GM18951 (cell line): ENCODE measurements at regions of chr11 and their contacts with region 1.

Region 1: DNA sequence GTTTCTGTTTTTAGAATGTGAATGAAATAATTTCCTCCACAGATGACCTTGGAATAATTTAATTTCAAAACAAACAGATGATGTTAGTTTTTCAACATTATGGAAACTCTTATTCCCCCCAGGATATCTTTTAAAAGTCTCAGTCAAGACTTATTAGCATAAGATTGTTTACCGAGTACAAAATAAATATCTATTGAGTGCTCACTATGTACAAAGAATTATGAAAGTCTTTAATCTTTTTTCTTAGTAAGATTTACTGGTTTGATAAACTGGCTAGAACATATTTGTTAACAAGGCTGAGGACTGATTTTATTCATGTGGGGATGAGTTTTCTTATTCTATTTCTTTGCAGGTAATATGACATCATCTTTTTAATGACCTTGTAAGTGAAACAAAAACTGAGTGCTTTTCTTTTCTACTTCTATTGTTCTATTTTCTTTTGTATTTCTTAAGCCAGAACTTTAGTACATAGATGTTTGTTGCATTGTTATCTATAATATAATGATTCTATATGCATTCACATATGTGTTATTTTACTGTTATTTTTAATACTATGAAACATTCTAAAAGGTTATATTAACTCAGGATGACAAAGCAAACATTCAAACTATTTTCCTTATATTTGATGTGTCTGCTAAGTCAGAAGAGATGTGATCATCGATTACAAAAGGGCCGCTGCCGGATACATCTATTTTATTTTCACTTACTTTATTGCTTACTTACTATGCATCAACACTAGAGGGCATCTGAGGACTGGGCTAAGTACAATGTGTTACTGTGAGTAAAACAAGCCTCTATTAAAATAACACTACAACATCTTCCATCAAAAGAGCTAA is 111.0 kb upstream of the ARHGAP42 start:
- POLR2A ChIP-seq: no peak

Region 2: GRCh38 chr11:100851170-100851569 is 275.1 kb after region 1 on chr11:
- in situ Hi-C with region 1: loop called (anchors 5 kb)
- POLR2A ChIP-seq: no peak

Region 3: GRCh38 chr11:100930185-100930778 is 354.2 kb after region 1 on chr11:
- in situ Hi-C with region 1: loop called (anchors 10 kb)
- POLR2A ChIP-seq: no peak

Region 4: DNA sequence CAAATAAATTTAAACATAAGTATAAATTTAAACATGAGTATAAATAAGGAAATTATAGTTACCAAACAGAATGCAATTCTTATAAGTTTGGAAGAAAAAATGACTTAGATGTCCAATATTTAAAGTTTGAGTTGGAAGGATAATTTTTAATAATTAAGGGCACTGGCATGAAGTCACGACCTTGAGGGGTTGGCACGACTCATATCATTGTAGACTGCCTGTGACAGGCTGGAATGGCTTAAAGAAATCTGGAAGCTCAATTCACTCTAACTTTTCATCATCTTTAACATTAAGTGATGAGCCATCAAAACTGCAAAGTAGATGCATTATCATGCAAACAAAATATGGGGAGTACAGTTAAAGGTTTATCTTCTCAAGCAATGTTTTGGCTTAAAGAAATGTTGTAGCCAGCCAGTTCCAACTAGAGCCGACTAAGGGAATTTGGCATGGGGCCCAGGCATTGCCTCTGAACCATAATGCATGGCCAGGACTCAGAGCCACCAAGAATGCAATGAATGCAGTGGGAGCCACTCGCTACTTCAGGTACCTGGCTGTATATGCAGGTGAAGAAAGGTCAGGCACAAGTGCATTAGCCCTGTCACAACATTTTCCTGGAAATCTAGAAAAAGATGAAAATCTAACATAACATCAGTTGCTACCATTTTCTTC is 520.1 kb after region 1 on chr11:
- in situ Hi-C with region 1: no loop called
- POLR2A ChIP-seq: no peak